AG04450 (cell line): ENCODE measurements at regions of chr15 and their contacts with region 1.

Region 1: GRCh38 chr15:43133430-43134156 is at the start of gene TMEM62:
- DNase-seq: no peak
- H3K4me3 ChIP-seq: peak within 1 kb of the TSS; percentile 72
- H3K27ac ChIP-seq: no peak within 1 kb of the TSS
- H3K27me3 ChIP-seq: no peaks in the 10 kb centered on the region
- CTCF ChIP-seq: no peak
- polyA plus RNA-seq, gene TMEM62: 4.3 and 4.8 TPM in 2 replicates

Region 2: DNA sequence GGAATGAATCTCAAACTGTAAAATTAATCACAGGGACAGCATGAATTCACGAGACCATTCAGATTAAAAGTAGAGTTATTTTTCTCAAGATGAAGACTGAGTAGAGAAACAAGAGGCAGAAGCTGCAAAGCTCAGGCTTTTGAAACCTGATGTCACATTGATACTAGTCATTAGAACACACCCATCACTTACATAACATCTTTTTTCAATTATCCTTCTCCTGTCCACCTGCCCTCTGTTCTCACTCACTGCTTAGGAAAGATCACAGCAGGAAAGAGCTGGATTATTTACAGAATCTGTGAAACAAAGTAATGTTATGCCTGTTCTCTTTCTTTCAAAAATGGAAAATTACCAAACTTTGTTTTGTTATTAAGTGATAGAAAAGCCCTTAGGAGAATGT is 324.7 kb before region 1 on chr15:
- CTCF ChIA-PET with region 1: no interaction called
- POLR2A ChIA-PET with region 1: no interaction called
- DNase-seq: no peak
- H3K4me3 ChIP-seq: no peak overlapping the region
- H3K27ac ChIP-seq: no peak overlapping the region
- H3K27me3 ChIP-seq: no peaks in the 10 kb centered on the region
- CTCF ChIP-seq: no peak

Region 3: DNA sequence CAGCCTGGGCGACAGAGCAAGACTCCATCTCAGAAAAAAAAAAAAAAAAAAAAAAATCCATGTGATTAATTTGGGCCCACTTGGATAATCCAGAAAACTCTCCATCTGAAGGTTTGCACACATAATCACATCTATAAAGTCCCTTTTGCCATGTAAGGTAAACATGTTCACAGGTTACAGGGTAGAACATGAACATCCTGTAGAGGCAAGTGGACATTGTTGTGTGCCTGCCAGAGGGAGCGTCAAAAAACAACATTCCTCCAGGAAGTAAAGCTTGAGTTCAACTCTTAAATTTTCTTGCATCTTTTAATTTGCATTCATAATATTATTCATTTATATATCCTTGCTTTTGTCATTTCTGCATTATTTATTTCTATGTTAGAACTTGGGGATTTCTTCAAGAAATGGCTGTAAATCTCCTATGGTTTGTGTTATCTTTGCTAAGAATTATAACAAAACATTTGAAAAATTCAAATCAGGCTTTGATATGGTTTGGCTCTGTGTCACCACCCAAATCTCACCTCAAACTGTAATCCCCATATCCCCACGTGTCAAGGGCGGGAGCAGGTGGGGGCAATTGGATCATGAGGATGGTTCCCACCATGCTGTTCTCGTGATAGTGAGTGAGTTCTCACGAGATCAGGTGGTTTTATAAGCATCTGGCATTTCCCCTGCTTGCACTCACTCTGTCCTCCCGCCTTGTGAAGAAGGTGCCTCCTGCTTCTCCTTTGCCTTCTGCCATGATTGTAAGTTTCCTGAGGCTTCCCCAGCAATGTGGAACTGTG is 201.7 kb before region 1 on chr15:
- CTCF ChIA-PET with region 1: interaction called, 10 read pairs
- POLR2A ChIA-PET with region 1: no interaction called
- DNase-seq: no peak
- H3K4me3 ChIP-seq: no peak overlapping the region
- H3K27ac ChIP-seq: no peak overlapping the region
- H3K27me3 ChIP-seq: no peaks in the 10 kb centered on the region
- CTCF ChIP-seq: no peak

Region 4: DNA sequence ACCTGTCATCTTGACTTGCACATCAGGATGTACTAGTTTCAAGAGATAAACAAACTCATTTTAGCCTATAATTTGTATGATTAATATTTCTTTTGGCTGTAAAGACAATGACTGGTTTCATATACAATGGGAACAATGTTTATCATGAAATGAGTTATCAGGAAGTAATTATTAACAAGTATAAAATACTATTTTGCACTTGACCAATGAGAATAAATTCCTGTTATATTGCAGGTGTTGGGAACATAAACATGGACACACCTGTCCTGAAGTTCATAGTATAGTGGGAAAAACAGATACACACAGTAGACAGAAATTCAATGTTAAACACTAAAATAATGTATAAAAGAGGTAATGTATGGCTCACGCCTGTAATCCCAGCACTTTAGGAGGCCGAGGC is 84.7 kb before region 1 on chr15:
- CTCF ChIA-PET with region 1: no interaction called
- POLR2A ChIA-PET with region 1: no interaction called
- DNase-seq: no peak
- H3K4me3 ChIP-seq: no peak overlapping the region
- H3K27ac ChIP-seq: no peak overlapping the region
- H3K27me3 ChIP-seq: no peaks in the 10 kb centered on the region
- CTCF ChIP-seq: no peak